ENCODE measurements at regions of chr1 and their contacts with region 1.

Region 1: GRCh38 chr1:89581859-89582258 is 51.1 kb upstream of the LRRC8C start:
- H3K4me3 ChIP-seq: no peak overlapping the region
- H3K27ac ChIP-seq: no peak overlapping the region
- H3K4me1 ChIP-seq: no peaks in the 10 kb centered on the region
- CTCF ChIP-seq: no peak

Region 2: GRCh38 chr1:89641781-89642180 is 59.9 kb after region 1 on chr1:
- CTCF ChIA-PET with region 1: no interaction called
- POLR2A ChIA-PET with region 1: no interaction called
- H3K4me3 ChIP-seq: no peak overlapping the region
- H3K27ac ChIP-seq: no peak overlapping the region
- H3K4me1 ChIP-seq: 0 out of 2 replicates have a peak, but pooled peaks cover 4% of the 10 kb centered on the region
- CTCF ChIP-seq: no peak

Region 3: DNA sequence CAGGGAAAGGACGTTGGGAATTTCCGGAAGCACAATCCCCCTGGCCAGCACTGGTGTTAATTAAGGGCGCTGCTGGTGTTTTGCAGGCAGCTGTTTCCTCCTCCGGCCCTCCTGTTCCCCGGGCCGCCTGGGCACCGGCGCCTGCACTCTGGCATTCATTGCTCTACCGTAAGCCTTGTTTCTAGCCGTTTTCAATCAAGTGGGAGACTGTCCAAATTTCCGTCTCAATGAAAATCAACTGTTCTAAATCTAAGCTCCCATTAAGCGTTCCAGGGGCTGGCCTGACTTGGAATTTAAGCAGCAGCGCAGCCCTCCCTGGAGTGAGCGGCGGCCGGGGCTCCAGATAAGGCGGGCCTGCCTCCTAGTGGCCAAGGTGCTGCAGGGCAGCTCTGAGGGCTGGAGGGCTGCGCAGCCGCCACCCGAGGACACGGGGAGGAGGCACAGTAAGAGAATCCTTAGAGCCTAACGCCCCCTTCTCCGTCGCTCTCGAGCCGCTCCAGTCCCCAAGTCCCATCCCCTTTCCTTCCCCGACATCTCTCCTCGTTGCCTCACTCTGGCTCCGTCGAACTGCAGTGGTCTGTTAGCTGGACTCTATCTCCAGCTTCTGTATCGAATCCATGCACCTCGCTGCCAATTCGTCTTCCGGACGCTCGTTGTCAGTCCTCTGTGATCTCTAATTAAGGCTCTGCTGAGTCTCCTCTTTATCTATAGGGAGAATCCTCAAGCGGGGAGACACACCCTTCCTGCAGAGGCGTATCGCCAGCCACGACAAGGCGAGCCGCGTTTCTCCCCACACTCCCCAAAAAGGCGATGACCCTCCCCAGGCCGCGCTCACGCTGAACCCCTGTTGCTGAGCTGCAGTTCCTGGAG is 181.2 kb after region 1 on chr1:
- CTCF ChIA-PET with region 1: no interaction called
- POLR2A ChIA-PET with region 1: no interaction called
- H3K4me3 ChIP-seq: peak overlapping the region; percentile 35
- H3K27ac ChIP-seq: no peak overlapping the region; the same call in 1 of the 2 replicates
- H3K4me1 ChIP-seq: no peaks in the 10 kb centered on the region
- CTCF ChIP-seq: peak; percentile 97

Region 4: DNA sequence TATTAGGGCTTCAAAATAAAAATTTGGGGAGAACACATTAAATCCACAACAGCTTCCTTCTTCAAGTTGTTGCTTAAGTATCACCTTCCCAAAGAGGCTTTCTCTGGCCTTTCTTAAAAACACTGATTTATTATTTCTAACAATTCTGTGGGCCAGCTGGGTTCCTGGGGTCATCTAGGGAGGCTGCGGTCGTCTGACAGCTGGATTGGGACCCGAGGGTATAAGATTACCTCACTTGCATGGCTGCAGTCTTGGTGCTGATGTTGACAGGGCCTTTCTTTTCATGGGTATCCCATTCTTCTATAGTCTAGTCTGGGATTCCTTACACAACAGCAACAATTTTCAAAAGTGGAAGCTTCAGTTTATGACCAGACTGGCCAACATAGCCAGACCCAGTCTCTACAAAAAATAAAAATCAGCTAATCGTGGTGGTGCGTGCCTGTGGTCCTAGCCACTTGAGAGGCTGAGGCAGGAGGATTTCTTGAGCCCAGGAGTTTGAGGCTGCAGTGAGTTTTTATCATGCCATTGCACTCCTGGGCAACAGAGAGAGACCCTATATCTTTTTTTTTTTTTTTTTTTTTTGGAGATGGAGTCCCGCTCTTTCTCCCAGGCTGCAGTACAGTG is 367.0 kb after region 1 on chr1:
- CTCF ChIA-PET with region 1: no interaction called
- POLR2A ChIA-PET with region 1: interaction called, 14 read pairs
- H3K4me3 ChIP-seq: no peak overlapping the region
- H3K27ac ChIP-seq: no peak overlapping the region
- H3K4me1 ChIP-seq: 0 out of 2 replicates have a peak, but pooled peaks cover 2% of the 10 kb centered on the region
- CTCF ChIP-seq: no peak